ENCODE measurements at regions of chr10 and their contacts with region 1.

Region 1: DNA sequence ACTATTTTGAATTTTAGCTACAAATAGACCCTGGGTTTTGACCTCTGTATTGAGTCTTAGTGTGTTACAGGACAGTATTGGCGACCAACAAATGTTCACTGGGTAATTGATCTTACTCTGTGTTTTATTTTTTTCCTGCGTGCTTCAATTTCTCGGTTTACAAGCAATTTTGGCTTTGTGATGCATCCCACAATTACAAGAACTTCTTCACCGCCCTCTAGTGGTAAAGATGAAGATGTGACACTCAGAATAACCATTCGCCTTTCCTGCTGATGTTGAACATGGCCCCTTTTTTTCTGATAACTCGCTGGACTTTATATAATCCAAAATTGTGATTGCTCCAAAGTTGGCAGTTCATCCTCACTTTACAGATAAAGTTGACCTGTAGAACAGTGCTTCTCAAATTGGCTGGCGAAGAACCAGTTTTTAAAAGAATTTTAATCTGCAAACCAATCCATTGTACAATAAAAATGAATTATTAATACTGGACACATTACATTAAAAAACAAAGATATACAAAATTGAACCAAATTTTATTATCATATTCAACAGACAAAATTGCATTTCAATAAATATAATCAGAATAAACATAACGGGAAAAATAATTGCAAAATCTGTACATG is 20.2 kb upstream of the SMC3 start:
- DNase-seq: no peak
- ATAC-seq: peak; percentile 32 to 63 (median 54)
- H3K4me3 ChIP-seq: no peak overlapping the region
- H3K27ac ChIP-seq: peak overlapping the region in 1 of 12 donors; percentile 75
- H3K4me1 ChIP-seq: peaks cover 0 to 12% (median 1%) of the 10 kb centered on the region in 12 donors
- H3K27me3 ChIP-seq: peaks cover 0 to 8% (median 0%) of the 10 kb centered on the region in 9 donors
- CTCF ChIP-seq: peak; percentile 69 to 88 (median 81)
- POLR2A ChIP-seq: no peak

Region 2: GRCh38 chr10:110304780-110305421 is 242.3 kb before region 1 on chr10 and contains the start of gene SMNDC1:
- intact Hi-C with region 1: loop called in 6 of 10 experiments (anchors 1 to 5 kb)
- DNase-seq: peak; percentile 97 to 98 (median 98)
- ATAC-seq: peak; percentile 95 to 97 (median 96)
- H3K4me3 ChIP-seq: peak within 1 kb of the TSS; percentile 72 to 93 (median 86)
- H3K27ac ChIP-seq: peak within 1 kb of the TSS; percentile 81 to 96 (median 92)
- H3K4me1 ChIP-seq: peaks cover 0 to 55% (median 41%) of the 10 kb centered on the region in 12 donors
- H3K27me3 ChIP-seq: no peaks in the 10 kb centered on the region
- CTCF ChIP-seq: no peak
- POLR2A ChIP-seq: peak in 1 of 2 donors; percentile 72
- total RNA-seq, gene SMNDC1: 5.2 to 23.1 (median 20.7) TPM

Region 3: GRCh38 chr10:110311357-110311949 is 235.8 kb before region 1 on chr10:
- intact Hi-C with region 1: loop called in 8 of 10 experiments (anchors 1 to 5 kb)
- DNase-seq: peak in 3 of 5 donors; percentile 32 to 56 (median 43)
- ATAC-seq: peak in 3 of 4 donors; percentile 64 to 85 (median 79)
- H3K4me3 ChIP-seq: no peak overlapping the region
- H3K27ac ChIP-seq: peak overlapping the region in 1 of 12 donors; percentile 38
- H3K4me1 ChIP-seq: peaks cover 0 to 9% (median 4%) of the 10 kb centered on the region in 12 donors
- H3K27me3 ChIP-seq: peaks cover 0 to 6% (median 0%) of the 10 kb centered on the region in 9 donors
- CTCF ChIP-seq: peak; percentile 39 to 78 (median 68)
- POLR2A ChIP-seq: no peak

Region 4: GRCh38 chr10:110460111-110460809 is 87.0 kb before region 1 on chr10:
- intact Hi-C with region 1: loop called in 1 of 10 experiments (anchors 5 kb)
- DNase-seq: peak in 3 of 5 donors; percentile 35 to 49 (median 36)
- ATAC-seq: peak; percentile 20 to 53 (median 33)
- H3K4me3 ChIP-seq: no peak overlapping the region
- H3K27ac ChIP-seq: peak overlapping the region in 5 of 12 donors; percentile 10 to 77 (median 40)
- H3K4me1 ChIP-seq: peaks cover 0 to 47% (median 14%) of the 10 kb centered on the region in 12 donors
- H3K27me3 ChIP-seq: no peaks in the 10 kb centered on the region
- CTCF ChIP-seq: no peak
- POLR2A ChIP-seq: no peak

Region 5: GRCh38 chr10:111207500-111207899 is 660.2 kb after region 1 on chr10:
- intact Hi-C with region 1: no loop called
- DNase-seq: no peak
- ATAC-seq: no peak
- H3K4me3 ChIP-seq: no peak overlapping the region
- H3K27ac ChIP-seq: no peak overlapping the region
- H3K4me1 ChIP-seq: no peaks in the 10 kb centered on the region
- H3K27me3 ChIP-seq: peaks cover 0 to 5% (median 0%) of the 10 kb centered on the region in 9 donors
- CTCF ChIP-seq: peak in 4 of 12 donors; percentile 9 to 31 (median 20)
- POLR2A ChIP-seq: no peak

Measured in heart left ventricle (tissue), 16 donors.